ENCODE measurements at regions of chr10 and their contacts with region 1.

Region 1: GRCh38 chr10:91251430-91252056 is 31.1 kb downstream of the PCGF5 start:
- DNase-seq: peak; percentile 54

Region 2: GRCh38 chr10:91006001-91006751 is 245.4 kb before region 1 on chr10:
- CTCF ChIA-PET with region 1: interaction called, 17 read pairs
- POLR2A ChIA-PET with region 1: no interaction called
- DNase-seq: peak; percentile 68

Measured in HEK293T (cell line).